Endothelial cell of umbilical vein (primary cell): ENCODE measurements at regions of chr17 and their contacts with region 1.

Region 1: GRCh38 chr17:16363749-16364536 is 10.7 kb upstream of the CENPV start:
- DNase-seq: peak; percentile 70
- H3K4me3 ChIP-seq: no peak overlapping the region
- H3K27ac ChIP-seq: no peak overlapping the region
- H3K4me1 ChIP-seq: no peaks in the 10 kb centered on the region
- H3K27me3 ChIP-seq: no peaks in the 10 kb centered on the region
- CTCF ChIP-seq: peak; percentile 85 to 92
- POLR2A ChIP-seq: no peak

Region 2: DNA sequence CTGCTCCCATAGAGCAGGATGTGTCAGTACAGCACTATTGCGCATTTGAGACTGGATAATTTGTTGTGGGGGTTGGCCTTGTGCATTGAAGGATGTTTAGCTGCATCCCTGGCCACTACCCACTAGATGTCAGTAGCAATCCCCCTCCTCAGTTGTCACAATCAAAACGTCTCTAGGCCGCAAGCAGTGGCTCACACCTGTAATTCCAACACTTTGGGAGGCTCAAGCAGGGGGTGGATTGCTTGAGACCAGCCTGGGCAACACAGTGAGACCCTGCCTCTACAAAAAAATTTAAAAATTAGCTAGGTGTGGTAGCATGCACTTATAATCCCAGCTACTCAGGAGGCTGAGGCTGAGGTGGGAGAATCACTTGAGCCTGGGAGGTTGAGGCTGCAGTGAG is 59.1 kb before region 1 on chr17:
- CTCF ChIA-PET with region 1: interaction called, 22 read pairs
- POLR2A ChIA-PET with region 1: no interaction called
- dilution Hi-C with region 1: no loop called
- intact Hi-C with region 1: no loop called
- DNase-seq: peak; percentile 40
- H3K4me3 ChIP-seq: no peak overlapping the region
- H3K27ac ChIP-seq: no peak overlapping the region
- H3K4me1 ChIP-seq: no peaks in the 10 kb centered on the region
- H3K27me3 ChIP-seq: no peaks in the 10 kb centered on the region
- CTCF ChIP-seq: peak; percentile 24 to 61
- POLR2A ChIP-seq: no peak

Region 3: DNA sequence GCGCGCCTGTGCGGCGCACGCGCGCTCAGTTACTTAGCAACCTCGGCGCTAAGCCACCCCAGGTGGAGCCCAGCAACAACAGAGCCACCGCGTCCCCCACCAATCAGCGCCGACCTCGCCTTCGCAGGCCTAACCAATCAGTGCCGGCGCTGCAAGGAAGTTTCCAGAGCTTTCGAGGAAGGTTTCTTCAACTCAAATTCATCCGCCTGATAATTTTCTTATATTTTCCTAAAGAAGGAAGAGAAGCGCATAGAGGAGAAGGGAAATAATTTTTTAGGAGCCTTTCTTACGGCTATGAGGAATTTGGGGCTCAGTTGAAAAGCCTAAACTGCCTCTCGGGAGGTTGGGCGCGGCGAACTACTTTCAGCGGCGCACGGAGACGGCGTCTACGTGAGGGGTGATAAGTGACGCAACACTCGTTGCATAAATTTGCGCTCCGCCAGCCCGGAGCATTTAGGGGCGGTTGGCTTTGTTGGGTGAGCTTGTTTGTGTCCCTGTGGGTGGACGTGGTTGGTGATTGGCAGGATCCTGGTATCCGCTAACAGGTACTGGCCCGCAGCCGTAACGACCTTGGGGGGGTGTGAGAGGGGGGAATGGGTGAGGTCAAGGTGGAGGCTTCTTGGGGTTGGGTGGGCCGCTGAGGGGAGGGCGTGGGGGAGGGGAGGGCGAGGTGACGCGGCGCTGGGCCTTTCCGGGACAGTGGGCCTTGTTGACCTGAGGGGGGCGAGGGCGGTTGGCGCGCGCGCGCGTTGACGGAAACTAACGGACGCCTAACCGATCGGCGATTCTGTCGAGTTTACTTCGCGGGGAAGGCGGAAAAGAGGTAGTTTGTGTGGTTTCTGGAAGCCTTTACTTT is 16.9 kb after region 1 on chr17 and contains the start of gene UBB:
- CTCF ChIA-PET with region 1: interaction called, 45 read pairs
- POLR2A ChIA-PET with region 1: interaction called, 16 read pairs
- dilution Hi-C with region 1: no loop called
- intact Hi-C with region 1: no loop called
- DNase-seq: peak; percentile 98
- H3K4me3 ChIP-seq: peak within 1 kb of the TSS; percentile 65 to 90 (median 88)
- H3K27ac ChIP-seq: peak within 1 kb of the TSS; percentile 97
- H3K4me1 ChIP-seq: peaks cover 4% of the 10 kb centered on the region
- H3K27me3 ChIP-seq: no peaks in the 10 kb centered on the region
- CTCF ChIP-seq: peak in 1 of 2 donors; percentile 22
- POLR2A ChIP-seq: peak; percentile 100
- total RNA-seq, gene UBB: 1,183 and 1,294 TPM in 2 replicates

Region 4: DNA sequence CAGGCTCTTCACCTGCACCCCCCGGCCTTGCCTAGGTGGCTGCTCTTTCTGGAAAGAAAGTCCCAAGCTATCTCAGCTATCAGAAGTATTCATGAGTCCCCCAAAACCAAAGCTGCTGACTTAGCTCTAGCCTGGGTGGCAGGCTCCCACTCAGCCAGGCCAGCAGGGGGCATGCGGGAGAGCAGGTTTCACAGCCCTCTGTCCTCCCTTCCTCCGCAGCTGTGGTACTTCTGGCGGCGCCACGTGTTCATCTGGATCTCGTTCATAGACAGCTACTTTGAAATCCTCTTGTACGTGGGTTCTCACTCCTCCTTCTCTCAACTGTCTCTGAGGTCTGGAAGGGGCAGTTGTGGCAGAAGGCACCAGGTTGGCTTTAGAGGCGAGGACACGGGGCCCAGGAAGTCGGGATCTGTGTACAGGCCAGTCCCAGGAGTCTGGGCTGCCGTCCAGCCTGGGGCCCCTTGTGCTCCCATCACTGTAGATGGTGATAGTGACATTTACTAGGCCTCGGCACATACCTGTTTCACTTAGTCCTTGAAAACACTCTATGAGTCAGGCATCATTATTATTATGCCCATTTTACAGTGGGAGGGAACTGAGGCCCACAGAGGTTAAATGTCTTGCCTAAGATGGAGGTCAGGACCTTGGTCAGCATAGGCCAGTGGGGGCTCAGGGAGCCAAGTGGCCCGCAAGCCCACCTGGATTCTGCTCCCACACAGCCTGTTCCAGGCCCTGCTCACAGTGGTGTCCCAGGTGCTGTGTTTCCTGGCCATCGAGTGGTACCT is 64.3 kb after region 1 on chr17:
- CTCF ChIA-PET with region 1: interaction called, 13 read pairs
- POLR2A ChIA-PET with region 1: no interaction called
- dilution Hi-C with region 1: no loop called
- intact Hi-C with region 1: no loop called
- DNase-seq: peak; percentile 29
- H3K4me3 ChIP-seq: no peak overlapping the region
- H3K27ac ChIP-seq: no peak overlapping the region
- H3K4me1 ChIP-seq: no peaks in the 10 kb centered on the region
- H3K27me3 ChIP-seq: no peaks in the 10 kb centered on the region
- CTCF ChIP-seq: peak; percentile 61 to 81
- POLR2A ChIP-seq: no peak

Region 5: DNA sequence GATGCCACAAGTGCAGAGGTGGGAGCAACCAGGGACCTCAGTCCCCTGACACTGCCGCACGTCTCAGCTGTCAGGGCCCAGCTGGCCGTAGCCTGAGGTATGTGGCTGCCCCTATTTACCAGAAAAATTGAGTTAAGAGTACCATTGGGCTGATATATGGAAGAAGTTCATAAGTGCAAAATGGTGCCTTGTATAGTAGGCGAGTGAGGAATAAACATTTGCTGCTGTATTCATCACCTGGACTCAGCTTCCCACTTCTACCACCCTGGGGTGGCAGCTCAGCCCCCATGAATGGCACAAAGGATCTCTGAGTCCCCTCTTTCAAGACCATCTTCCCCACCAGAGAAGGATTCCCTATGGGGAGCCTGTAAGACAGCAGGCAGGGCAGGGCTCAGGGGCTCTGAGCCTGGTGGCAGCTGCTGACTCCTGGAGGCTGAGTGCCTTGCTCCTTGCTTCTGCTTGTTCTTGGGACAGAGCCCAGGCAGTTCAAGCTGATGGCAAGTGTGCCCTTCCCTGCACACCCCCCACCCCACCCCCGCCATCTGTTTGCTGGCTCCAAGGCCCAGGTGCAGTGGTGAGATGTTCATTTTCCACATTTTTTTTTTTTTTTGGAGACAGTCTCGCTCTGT is 80.4 kb after region 1 on chr17:
- CTCF ChIA-PET with region 1: interaction called, 19 read pairs
- POLR2A ChIA-PET with region 1: no interaction called
- dilution Hi-C with region 1: no loop called
- intact Hi-C with region 1: no loop called
- DNase-seq: no peak
- H3K4me3 ChIP-seq: no peak overlapping the region
- H3K27ac ChIP-seq: no peak overlapping the region
- H3K4me1 ChIP-seq: peaks cover 31% of the 10 kb centered on the region
- H3K27me3 ChIP-seq: no peaks in the 10 kb centered on the region
- CTCF ChIP-seq: no peak
- POLR2A ChIP-seq: peak; percentile 8

Region 6: GRCh38 chr17:16589097-16589969 is 225.4 kb after region 1 on chr17:
- CTCF ChIA-PET with region 1: interaction called, 18 read pairs
- POLR2A ChIA-PET with region 1: no interaction called
- dilution Hi-C with region 1: no loop called
- intact Hi-C with region 1: no loop called
- DNase-seq: peak; percentile 87
- H3K4me3 ChIP-seq: peak overlapping the region; percentile 34 to 50 (median 35)
- H3K27ac ChIP-seq: no peak overlapping the region
- H3K4me1 ChIP-seq: peaks cover 4% of the 10 kb centered on the region
- H3K27me3 ChIP-seq: peaks cover 23 to 31% of the 10 kb centered on the region in 2 experiments
- CTCF ChIP-seq: peak; percentile 96 to 100
- POLR2A ChIP-seq: no peak